ENCODE measurements at regions of chr18 and their contacts with region 1.

Region 1: DNA sequence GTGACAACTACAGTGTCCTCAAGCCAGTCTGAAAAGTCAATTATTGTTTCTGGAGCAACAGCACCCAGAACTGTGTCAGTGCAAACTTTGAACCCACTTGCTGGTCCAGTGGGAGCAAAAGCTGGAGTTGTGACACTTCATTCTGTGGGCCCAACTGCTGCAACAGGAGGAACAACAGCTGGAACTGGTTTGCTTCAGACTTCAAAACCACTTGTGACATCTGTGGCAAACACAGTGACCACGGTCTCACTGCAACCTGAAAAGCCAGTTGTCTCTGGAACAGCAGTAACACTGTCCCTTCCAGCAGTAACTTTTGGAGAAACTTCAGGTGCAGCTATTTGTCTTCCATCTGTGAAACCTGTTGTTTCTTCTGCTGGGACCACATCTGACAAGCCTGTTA is 59.8 kb downstream of the TAF4B start:
- DNase-seq: peak in 2 of 9 experiments; percentile 4 to 8
- ATAC-seq: no peak
- H3K4me3 ChIP-seq: no peak overlapping the region
- H3K4me3 Mint-ChIP-seq: no peak overlapping the region
- H3K27ac ChIP-seq: no peak overlapping the region
- H3K27ac Mint-ChIP-seq: no peak overlapping the region
- H3K4me1 ChIP-seq: no peaks in the 10 kb centered on the region
- H3K4me1 Mint-ChIP-seq: peaks cover 16% of the 10 kb centered on the region
- H3K27me3 ChIP-seq: no peaks in the 10 kb centered on the region
- H3K27me3 Mint-ChIP-seq: no peaks in the 10 kb centered on the region
- CTCF ChIP-seq: no peak

Region 2: DNA sequence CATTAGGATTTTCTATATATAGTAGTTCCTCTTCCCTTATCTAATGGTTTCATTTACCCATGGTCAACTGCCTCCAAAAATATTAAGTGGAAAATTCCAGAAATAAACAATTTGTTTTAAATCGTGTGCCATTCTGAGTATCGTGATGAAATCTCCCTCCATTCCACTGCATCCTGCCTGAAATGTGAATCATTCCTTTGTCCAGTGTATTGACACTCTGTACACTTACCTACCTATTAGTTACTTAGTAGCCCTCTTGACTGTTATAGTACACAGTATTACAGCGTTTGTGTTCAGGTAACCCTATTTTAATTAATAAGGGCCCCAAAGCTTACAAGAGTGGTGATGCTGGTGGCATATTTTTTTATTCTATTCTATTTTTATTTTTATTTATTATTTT is 33.6 kb before region 1 on chr18:
- CTCF ChIA-PET with region 1: no interaction called
- POLR2A ChIA-PET with region 1: no interaction called
- intact Hi-C with region 1: loop called in 1 of 2 experiments (anchors 5 kb)
- DNase-seq: no peak
- ATAC-seq: no peak
- H3K4me3 ChIP-seq: no peak overlapping the region
- H3K4me3 Mint-ChIP-seq: no peak overlapping the region
- H3K27ac ChIP-seq: no peak overlapping the region
- H3K27ac Mint-ChIP-seq: no peak overlapping the region
- H3K4me1 ChIP-seq: no peaks in the 10 kb centered on the region
- H3K4me1 Mint-ChIP-seq: peaks cover 28% of the 10 kb centered on the region
- H3K27me3 ChIP-seq: no peaks in the 10 kb centered on the region
- H3K27me3 Mint-ChIP-seq: no peaks in the 10 kb centered on the region
- CTCF ChIP-seq: no peak

Measured in CD8-positive, alpha-beta T cell (primary cell).